ENCODE measurements at regions of chr1 and their contacts with region 1.

Region 1: DNA sequence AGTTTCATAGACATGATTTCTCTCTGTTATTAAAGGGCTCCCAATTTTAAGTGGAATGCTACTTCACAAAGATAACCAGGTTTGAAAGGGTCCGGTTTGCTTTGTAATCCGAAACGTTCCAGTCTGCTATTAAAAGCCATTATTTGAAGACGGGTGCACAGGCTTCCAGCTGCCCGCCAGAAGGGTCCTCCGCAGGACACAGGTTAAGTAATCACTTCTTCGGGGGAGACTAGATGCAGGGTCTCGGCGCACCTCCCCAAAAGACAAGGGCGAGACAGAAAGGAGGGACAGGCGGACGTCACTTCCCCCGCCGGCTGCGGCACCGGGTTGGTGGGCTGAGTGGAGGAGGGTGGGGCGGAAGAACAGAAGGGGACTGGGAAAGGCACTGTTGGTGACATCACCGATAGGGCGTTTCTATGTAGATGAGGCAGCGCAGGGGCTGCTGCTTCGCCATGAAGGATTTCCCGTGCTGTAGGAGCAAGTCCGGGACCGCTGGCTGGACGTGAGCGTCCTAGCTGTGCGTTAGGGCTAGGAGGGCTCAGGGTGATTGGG is 8.9 kb downstream of the RNU1-2 start:
- DNase-seq: peak; percentile 89

Region 2: GRCh38 chr1:16613185-16614147 is 291.2 kb before region 1 on chr1 and contains the start of gene NBPF1:
- CTCF ChIA-PET with region 1: interaction called, 4 read pairs
- POLR2A ChIA-PET with region 1: interaction called, 12 read pairs
- DNase-seq: peak; percentile 100

Region 3: DNA sequence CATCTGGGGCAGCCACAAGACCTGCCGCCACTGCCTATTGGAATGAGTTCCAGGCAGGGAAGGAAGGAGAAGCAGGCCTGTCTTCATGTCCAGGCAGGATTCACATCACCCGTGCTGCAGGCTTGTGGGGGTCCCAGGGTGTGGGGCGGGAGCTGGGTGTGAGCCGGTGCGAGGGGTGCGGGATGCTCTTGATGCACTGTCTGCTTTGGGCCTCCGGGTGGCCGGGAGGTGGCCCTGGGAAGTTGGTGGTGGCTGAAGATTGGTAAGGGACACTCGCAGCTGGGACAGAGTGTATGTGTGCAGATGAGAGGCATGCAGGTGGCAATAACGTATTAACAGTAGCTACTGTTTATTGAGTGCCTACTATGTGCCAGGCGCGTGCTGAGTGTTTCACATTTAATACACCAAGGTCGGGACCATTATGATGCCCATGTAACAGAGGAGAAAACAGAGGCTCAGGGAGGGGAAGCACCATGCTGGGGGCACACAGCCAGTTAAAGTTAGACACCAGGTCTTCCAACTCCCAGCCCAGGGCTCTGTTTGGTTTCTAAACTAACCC is 20.4 kb after region 1 on chr1:
- CTCF ChIA-PET with region 1: no interaction called
- POLR2A ChIA-PET with region 1: interaction called, 12 read pairs
- DNase-seq: no peak

Region 4: GRCh38 chr1:16970132-16970910 is 65.7 kb after region 1 on chr1:
- CTCF ChIA-PET with region 1: no interaction called
- POLR2A ChIA-PET with region 1: no interaction called
- DNase-seq: no peak

Region 5: DNA sequence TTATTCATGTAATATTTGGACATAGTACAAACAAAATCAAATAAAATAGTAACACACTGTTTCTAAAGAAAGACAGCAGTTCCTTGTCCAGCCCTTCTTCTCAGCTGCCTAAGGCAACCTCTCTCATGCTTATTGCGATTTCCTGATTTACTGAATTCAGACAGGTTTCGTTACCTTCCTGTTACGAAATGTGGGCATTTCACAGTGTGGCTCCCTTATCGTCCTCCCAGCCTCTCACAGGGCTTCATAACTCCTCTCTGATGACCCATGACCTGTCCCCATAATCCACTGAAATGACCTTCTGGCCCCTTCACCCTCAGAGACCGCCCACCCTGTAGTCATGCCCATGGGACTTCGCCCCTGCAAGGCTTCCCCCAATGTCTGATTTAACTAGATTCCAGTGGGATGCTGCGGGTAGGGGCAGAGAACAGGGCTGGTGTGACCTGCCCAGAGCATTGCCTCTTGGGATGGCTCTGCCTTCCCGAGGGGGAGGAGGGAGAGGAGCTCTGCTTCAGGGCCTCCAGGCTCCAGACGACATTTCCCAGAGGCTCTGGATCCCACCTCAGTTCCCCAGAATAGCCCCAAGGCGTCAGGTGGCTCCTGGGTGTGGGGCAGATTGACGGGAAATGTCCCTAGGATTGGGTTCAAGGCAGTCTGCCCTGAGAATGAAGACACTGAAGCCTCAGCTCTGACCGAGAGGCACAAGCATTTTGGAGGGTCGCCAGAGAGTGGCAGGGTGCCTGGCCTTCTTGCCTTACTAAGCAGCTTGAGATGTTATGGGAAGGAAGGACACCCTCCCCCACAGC is 194.0 kb after region 1 on chr1:
- CTCF ChIA-PET with region 1: no interaction called
- POLR2A ChIA-PET with region 1: no interaction called
- DNase-seq: no peak

Region 6: GRCh38 chr1:17119076-17119772 is 214.6 kb after region 1 on chr1 and contains the start of gene PADI2:
- CTCF ChIA-PET with region 1: no interaction called
- POLR2A ChIA-PET with region 1: no interaction called
- DNase-seq: peak; percentile 90